Heart right ventricle (tissue), 16 donors: ENCODE measurements at regions of chrX and their contacts with region 1.

Region 1: DNA sequence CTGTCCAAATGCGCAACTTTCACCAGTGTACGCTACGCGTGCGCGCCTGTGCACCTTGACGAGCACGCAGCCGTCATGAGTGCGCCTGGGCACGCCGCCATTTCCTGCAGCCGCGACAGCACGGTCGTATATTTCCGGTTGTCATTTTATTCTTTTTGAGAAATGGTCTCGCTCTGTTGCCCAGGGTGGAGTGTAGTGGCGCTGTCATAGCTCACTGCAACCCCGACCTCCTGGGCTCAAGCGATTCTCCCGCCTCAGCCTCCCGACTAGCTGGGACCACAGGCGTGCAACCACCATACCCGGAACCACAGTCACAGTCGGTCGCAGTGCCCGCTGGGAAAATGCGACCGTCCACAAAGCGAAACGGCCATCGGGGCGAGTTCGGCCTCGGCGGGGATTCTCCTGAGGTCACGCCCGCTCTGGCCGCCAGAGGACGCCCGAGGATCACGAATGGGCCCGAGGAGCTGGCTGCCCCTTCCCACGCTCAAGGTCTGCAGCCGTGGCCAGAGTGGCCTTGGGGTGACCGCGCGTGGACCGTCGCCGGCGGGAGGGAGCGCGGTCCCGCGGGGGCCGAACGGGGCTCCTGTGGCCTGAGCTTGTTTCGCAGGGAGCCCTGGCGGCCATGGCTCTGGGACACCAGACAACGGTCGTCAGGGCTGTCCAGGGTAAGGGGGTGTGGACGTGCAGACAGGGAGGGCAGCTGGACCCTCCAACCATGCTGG is 23.7 kb upstream of the PNMA3 start:
- DNase-seq: peak; percentile 62 to 79
- ATAC-seq: peak; percentile 79 to 94 (median 83)
- H3K4me3 ChIP-seq: peak overlapping the region in 9 of 10 donors; percentile 16 to 51 (median 37)
- H3K27ac ChIP-seq: peak overlapping the region in 1 of 10 donors; percentile 69
- H3K4me1 ChIP-seq: no peaks in the 10 kb centered on the region
- H3K27me3 ChIP-seq: peaks cover 0 to 5% (median 0%) of the 10 kb centered on the region in 7 donors
- CTCF ChIP-seq: peak; percentile 60 to 87 (median 80)

Region 2: GRCh38 chrX:153153516-153153915 is 121.0 kb after region 1 on chrX:
- intact Hi-C with region 1: no loop called
- DNase-seq: no peak
- ATAC-seq: no peak
- H3K4me3 ChIP-seq: no peak overlapping the region
- H3K27ac ChIP-seq: no peak overlapping the region
- H3K4me1 ChIP-seq: no peaks in the 10 kb centered on the region
- H3K27me3 ChIP-seq: peaks cover 0 to 58% (median 0%) of the 10 kb centered on the region in 7 donors
- CTCF ChIP-seq: no peak

Region 3: DNA sequence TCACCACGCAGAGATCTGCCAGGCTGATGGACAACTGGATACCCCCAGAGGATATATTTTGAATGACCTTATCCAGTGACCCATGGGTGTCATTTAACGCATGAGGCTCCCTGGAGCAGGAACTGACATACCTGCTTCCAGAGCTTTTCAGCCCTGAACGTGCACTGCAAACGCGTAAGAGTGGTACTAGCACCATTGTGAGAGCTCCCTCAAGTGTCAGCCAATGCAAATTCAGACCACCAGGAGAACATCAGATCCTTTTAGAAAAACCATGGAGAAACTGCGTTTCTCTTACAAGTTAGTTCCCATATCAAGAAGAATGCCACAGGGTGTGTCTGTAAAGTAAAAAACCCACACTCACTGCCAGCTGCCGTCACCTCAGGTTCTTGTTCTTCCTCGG is 406.0 kb after region 1 on chrX:
- intact Hi-C with region 1: loop called in 2 of 10 experiments (anchors 5 to 10 kb)
- DNase-seq: no peak
- ATAC-seq: peak in 1 of 8 donors; percentile 50
- H3K4me3 ChIP-seq: no peak overlapping the region
- H3K27ac ChIP-seq: no peak overlapping the region
- H3K4me1 ChIP-seq: no peaks in the 10 kb centered on the region
- H3K27me3 ChIP-seq: peaks cover 0 to 4% (median 0%) of the 10 kb centered on the region in 7 donors
- CTCF ChIP-seq: peak in 6 of 9 donors; percentile 10 to 56 (median 34)

Region 4: DNA sequence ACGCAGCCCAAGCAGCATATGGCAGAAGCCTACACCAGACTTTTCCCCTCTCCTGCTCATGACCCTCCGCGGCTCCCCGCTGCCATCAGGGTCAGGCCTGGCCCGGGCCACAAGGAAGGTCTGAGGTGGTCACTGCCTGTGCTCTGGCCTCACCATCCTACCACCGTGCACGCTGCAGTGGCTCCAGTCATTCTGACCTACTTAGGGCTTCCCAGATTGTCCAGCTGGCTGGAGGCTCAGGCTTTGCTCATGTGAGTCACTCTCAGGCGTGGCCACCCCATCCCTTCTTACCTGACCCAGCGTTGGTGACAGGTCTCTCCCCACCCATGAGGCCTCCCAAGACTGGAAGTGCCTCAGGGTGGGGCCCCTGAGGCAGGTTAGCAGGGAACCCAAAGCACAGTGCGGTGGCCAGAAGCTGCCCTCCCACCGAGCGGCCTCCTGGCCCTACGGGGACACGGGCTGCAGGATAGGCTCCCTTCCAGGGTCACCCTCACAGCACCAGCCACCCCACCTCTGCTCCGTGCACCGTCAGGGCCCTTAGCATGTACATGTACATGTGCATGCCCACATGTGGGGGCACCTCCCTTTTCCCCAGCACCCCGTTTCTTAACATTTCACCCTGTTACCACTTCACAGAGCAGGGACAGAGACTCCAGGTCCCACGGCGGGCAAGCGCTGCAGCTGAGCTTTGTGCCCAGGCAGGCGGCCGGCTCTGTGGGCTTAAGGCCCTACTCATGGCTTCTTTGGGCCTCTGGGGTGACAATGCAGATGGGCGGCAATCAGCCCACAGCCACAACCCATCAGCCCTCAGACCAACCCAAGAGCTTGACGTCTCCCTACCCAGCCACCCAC is 411.1 kb after region 1 on chrX:
- intact Hi-C with region 1: loop called in 2 of 10 experiments (anchors 5 to 10 kb)
- DNase-seq: no peak
- ATAC-seq: peak in 1 of 8 donors; percentile 22
- H3K4me3 ChIP-seq: no peak overlapping the region
- H3K27ac ChIP-seq: no peak overlapping the region
- H3K4me1 ChIP-seq: no peaks in the 10 kb centered on the region
- H3K27me3 ChIP-seq: peaks cover 0 to 4% (median 0%) of the 10 kb centered on the region in 7 donors
- CTCF ChIP-seq: no peak

Region 5: DNA sequence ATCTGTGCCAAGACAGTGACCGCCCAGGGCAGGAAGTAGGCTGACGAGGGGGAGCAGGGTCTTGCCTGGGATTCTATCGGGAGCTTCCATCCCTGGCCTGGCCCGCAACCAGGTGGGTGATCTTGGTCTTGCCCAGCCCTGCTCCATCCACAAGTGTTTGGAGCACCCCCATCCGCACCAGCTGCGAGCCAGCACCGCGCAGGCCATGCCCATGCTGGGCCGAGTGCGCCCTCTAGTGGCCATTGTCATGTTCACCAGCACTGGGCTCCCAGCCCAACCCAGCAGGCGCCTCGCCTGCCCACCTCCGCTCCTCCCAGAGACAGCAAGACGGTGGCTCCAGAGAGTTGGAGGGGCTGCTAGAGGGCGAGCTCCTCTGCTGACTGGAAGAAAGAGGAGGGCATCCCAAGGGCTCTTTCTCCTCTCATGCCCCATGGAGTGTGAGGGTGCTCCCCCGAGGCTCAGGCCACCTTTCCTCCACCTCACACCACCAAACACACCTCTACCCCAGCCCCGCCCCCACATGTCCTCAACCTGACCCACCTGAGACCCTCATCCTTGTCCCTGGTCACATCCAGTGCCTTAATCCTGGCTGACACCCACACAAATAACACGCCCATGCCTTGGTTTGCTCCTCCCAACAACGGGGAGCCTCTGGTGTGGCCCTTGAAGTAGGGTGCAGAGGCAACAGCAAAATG is 475.1 kb after region 1 on chrX:
- intact Hi-C with region 1: loop called in 3 of 10 experiments (anchors 10 kb)
- DNase-seq: peak; percentile 74 to 83
- ATAC-seq: peak; percentile 77 to 93 (median 86)
- H3K4me3 ChIP-seq: no peak overlapping the region
- H3K27ac ChIP-seq: peak overlapping the region in 1 of 10 donors; percentile 10
- H3K4me1 ChIP-seq: peaks cover 0 to 10% (median 0%) of the 10 kb centered on the region in 9 donors
- H3K27me3 ChIP-seq: peaks cover 0 to 10% (median 0%) of the 10 kb centered on the region in 7 donors
- CTCF ChIP-seq: peak; percentile 65 to 95 (median 82)

Region 6: DNA sequence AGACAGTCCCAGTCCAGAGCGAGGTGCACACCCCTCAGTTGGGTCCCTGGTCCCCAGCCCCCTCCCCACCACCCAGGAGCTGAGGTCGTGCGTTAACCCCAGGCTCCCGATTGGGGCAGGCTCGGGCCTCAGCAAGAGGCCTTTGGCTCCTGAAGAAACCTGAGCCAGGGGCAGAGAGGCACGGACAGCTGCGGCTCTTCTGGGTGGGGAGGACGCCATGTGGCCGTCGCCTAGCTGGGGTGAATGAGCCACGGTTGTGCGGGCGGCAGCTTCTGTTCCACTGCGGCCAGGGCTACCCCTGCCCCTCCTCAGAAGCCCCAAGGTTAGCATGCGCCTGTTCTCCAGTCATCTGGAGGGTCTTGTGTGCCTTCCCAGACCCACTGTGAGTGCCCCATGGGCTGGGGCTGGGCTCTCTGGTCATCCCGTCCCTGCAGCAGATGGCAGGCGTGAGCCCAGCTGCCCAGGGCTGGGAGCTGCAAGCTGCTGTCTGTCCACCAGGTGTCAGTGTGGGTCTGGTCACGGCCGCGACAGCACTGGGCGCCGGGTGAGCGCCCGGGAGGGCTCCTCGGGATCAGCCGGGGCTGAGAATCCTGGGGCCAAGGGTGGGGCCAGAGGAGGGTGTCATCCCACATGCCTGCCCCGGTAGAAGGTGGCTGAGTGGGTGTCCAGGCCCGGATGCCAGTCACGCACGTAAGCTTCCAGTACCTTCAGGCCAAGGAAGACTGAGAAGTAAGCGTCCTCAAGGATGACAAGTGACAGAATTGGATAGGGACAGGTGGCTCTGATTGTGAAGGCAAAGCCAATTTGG is 506.8 kb after region 1 on chrX:
- intact Hi-C with region 1: loop called in 1 of 10 experiments (anchors 10 kb)
- DNase-seq: peak; percentile 50 to 66
- ATAC-seq: peak; percentile 76 to 92 (median 88)
- H3K4me3 ChIP-seq: no peak overlapping the region
- H3K27ac ChIP-seq: no peak overlapping the region
- H3K4me1 ChIP-seq: no peaks in the 10 kb centered on the region
- H3K27me3 ChIP-seq: peaks cover 0 to 34% (median 0%) of the 10 kb centered on the region in 7 donors
- CTCF ChIP-seq: peak; percentile 53 to 94 (median 80)